ENCODE measurements at regions of chr5 and their contacts with region 1.

Region 1: DNA sequence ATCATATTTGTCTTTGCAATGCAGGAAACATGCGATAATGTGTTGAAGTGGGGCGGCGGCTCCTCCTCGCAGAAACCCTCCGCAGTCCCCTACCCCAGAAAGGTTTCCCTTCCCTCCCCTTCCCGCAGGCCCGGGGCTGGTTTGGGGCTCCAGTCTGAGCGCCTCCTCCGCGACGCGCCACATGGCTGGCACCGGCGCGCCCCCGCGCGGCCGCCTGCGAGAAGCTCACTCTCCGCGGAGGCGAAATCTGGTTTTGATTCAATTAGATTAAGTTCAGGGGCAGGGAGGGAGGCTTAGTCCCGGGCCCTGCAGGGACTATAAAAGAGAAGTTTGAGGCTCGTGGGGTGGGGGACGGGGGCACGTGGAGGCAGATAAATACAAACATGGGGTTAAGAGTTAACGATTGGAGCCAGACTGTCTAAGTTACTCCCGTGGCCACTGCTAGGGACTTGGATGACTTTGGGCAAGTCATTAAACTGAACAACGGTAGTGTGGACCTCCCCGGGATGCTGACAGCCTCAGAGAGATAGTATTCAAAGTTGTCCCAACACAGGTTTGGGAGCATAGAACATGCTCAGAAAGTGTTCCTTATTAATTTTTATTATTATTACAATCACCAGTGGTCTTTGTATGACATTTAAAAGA is 69.4 kb downstream of the MSX2 start:
- DNase-seq: peak; percentile 40 to 68
- H3K4me3 ChIP-seq: peak overlapping the region in 1 of 3 donors; percentile 19
- H3K27ac ChIP-seq: no peak overlapping the region
- H3K4me1 ChIP-seq: no peaks in the 10 kb centered on the region
- H3K27me3 ChIP-seq: peaks cover 0 to 30% of the 10 kb centered on the region in 2 donors
- CTCF ChIP-seq: peak in 2 of 3 donors; percentile 65 to 79
- POLR2A ChIP-seq: no peak

Region 2: DNA sequence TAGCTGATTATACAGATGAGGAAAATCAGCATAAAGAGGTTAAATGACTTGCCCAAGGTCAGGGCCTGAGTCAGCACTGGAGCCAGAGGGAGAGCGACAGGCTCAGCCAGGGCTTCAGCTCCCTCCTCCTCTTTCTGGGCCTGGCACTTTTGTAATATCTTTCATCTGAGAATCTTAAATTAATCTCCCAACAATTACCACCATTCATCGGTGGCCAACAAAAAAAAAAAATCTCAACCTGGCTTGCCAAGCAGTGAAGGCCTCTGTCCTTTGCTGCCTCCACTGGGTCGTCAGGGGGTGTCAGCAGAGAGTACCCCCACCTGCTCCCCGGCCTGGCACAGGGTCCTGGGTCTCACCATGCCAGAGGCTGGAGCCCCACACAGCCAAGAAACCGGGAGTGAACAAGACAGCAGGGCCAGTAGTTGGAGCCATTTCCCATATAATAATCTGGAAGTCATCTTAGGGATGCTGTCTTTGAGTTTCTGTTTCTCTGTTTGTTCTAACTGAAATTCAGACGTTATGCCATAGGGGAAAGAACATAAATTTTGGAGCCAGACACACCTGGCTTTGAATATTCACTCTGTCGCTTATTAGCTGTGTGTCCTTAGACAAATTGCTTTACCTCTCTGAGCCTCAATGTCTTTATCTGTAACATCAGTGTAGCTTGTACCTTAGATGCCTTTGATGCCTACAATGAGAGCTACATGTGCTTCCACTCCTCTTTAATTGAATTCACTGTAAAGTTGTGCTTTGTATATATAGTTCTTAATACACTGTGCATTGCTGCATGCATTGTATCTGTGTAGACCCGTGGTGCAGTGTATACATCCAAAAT is 369.4 kb before region 1 on chr5:
- intact Hi-C with region 1: loop called (anchors 10 kb)
- DNase-seq: peak in 1 of 2 donors; percentile 29
- H3K4me3 ChIP-seq: no peak overlapping the region
- H3K27ac ChIP-seq: peak overlapping the region in 1 of 2 donors; percentile 7
- H3K4me1 ChIP-seq: no peaks in the 10 kb centered on the region
- H3K27me3 ChIP-seq: no peaks in the 10 kb centered on the region
- CTCF ChIP-seq: no peak
- POLR2A ChIP-seq: no peak

Region 3: DNA sequence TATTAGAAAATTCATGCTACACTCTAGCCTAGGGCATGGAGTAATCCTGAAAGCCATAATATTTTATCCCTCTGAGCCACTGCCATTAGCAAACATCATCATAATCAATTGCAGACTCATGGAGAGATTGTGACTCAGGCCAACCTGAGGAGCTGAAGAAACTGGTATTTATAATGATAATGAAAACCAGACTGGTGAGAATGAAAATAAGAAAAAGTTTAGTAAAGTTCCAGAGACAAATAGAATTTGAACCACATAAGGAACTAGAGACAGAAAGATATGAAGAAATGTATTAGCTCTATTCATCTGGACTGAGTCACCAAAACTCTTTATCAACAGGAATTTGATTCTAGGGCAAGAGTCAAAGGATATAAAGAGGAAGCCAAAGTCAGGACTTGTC is 491.5 kb after region 1 on chr5:
- intact Hi-C with region 1: no loop called
- DNase-seq: no peak
- H3K4me3 ChIP-seq: no peak overlapping the region
- H3K27ac ChIP-seq: no peak overlapping the region
- H3K4me1 ChIP-seq: no peaks in the 10 kb centered on the region
- H3K27me3 ChIP-seq: no peaks in the 10 kb centered on the region
- CTCF ChIP-seq: no peak
- POLR2A ChIP-seq: no peak

Measured in breast epithelium (tissue), 4 donors.